ENCODE measurements at regions of chr19 and their contacts with region 1.

Region 1: GRCh38 chr19:38904581-38905539 is 5.1 kb downstream of the NFKBIB start:
- DNase-seq: no peak
- H3K4me3 ChIP-seq: no peak overlapping the region
- H3K27ac ChIP-seq: no peak overlapping the region
- H3K4me1 ChIP-seq: peaks cover 0 to 6% (median 3%) of the 10 kb centered on the region in 4 experiments; a peak in 3 of 7 replicates
- H3K27me3 ChIP-seq: no peaks in the 10 kb centered on the region
- CTCF ChIP-seq: no peak
- EP300 ChIP-seq: no peak
- POLR2A ChIP-seq: no peak
- RAD21 ChIP-seq: no peak

Region 2: DNA sequence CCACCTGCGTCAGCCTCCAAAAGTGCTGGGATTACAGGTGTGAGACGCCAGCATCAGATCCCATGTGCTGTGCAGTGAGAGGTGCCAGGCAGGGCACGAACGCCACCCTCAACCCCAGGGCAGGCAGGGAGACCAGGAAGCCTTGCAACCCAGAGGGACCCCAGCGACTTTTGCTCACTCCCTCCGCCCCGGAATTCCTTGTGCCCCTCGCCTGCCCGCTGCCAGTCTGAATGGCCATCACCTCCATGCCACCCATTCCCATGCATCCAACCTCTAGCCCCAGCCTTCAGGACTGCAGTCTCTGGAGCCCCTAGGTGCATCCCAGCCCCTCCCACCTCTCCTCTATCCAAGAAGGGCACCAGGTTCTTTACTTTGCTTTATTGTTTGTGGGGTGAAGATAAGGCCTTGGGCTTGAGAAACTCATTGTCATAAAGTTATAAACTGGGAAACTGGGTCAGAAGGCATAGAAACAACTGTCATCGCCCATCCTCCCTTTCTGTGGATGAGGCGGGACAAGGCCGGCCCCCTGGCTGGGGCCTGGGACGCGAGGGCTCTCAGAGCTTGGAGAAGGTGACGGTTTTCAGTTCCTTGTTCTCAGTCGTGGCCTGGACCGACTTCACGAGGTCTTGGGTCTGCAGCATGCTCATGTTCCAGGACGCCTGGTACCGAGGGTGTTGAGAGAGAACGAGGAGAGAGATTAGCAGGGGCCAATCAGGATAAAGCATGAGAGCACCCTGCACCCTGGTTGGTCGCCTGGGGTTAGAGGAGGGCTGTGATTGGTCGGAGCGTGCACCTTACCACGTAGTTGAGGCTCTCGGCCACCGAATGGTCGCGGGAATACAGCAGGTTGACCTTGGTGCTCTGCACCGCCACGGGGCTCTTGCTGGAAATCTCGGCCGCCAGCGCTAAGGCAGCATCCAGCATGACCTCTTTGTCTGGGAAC is 89.5 kb before region 1 on chr19:
- CTCF ChIA-PET with region 1: no interaction called
- POLR2A ChIA-PET with region 1: no interaction called
- DNase-seq: no peak
- H3K4me3 ChIP-seq: no peak overlapping the region
- H3K27ac ChIP-seq: no peak overlapping the region
- H3K4me1 ChIP-seq: no peaks in the 10 kb centered on the region
- H3K27me3 ChIP-seq: no peaks in the 10 kb centered on the region
- CTCF ChIP-seq: no peak
- EP300 ChIP-seq: no peak
- POLR2A ChIP-seq: no peak
- RAD21 ChIP-seq: no peak

Region 3: DNA sequence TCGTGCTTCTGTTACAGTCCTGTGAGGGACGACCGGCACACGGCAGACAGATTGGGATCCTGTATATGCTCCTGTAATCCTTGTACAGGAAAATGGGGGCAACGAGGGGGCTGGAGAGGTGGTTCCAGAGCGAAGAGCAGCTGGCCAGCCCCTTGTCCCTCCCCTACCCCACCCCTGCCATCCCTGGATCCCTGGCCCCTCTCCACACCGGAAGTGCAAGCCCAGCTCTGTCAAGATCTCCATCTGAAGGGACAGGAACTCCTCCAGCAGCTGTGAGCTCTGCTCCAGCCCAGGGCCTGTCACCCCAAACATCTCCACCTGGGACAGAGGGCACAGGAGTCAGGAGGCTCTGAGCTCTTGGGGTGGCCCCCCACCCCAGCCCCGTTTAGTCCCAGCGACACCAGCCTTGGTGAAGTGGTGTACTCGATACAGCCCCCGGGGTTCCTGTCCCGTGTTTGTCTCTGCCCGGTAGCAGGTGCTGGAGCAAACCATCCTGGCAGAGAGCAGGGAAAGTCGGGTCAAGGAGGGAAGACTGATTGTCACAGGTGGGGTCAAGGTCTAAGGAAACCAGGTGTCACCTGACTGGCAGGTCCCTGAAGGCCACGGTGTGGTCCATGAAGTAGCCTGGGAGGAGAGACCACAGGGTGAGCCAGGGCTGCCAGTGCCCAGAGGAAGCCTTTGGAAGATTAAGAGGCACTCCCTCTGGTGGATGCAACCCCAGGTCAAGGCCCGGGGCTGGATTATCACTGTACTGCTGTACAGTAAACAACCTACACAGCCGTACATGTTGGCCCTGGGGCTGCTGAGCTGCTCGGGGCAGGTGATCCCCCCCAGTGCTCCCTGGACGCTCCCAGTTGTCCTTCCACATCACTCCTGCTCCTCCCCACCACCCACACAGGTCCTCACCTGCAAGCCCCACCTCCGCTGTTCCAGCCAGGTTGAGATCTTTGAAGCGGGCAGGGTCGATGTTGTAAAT is 12.9 kb after region 1 on chr19:
- CTCF ChIA-PET with region 1: interaction called, 5 read pairs
- POLR2A ChIA-PET with region 1: interaction called, 10 read pairs
- DNase-seq: no peak
- H3K4me3 ChIP-seq: no peak overlapping the region
- H3K27ac ChIP-seq: no peak overlapping the region
- H3K4me1 ChIP-seq: no peaks in the 10 kb centered on the region
- H3K27me3 ChIP-seq: no peaks in the 10 kb centered on the region; a peak in 1 of 7 replicates
- CTCF ChIP-seq: peak in 1 of 3 experiments; percentile 11; a peak in 2 of 4 replicates
- EP300 ChIP-seq: no peak
- POLR2A ChIP-seq: no peak
- RAD21 ChIP-seq: no peak

Region 4: DNA sequence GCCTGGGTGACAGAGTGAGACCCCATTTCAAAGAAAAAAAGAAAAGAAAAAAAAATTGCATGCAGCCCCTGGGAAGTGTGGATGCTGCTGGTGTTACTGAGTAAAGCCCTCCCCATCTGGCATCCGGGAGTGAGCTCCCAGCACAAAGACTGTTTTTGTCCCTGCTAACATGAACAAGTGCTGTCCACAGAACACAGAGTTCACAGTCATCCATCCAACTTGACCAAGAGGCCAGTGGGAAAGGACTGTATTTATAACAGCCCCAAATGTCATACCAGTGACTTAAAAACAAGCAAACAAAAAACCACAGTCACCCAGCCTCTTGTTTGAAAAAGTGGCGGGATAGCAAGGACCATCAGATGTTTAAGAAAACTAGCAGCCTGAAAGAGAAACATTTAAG is 59.9 kb after region 1 on chr19:
- CTCF ChIA-PET with region 1: no interaction called
- POLR2A ChIA-PET with region 1: no interaction called
- DNase-seq: no peak
- H3K4me3 ChIP-seq: no peak overlapping the region
- H3K27ac ChIP-seq: no peak overlapping the region
- H3K4me1 ChIP-seq: peaks cover 0 to 3% (median under 1%) of the 10 kb centered on the region in 4 experiments; a peak in 2 of 7 replicates
- H3K27me3 ChIP-seq: no peaks in the 10 kb centered on the region
- CTCF ChIP-seq: no peak
- EP300 ChIP-seq: no peak
- POLR2A ChIP-seq: no peak
- RAD21 ChIP-seq: no peak

Region 5: DNA sequence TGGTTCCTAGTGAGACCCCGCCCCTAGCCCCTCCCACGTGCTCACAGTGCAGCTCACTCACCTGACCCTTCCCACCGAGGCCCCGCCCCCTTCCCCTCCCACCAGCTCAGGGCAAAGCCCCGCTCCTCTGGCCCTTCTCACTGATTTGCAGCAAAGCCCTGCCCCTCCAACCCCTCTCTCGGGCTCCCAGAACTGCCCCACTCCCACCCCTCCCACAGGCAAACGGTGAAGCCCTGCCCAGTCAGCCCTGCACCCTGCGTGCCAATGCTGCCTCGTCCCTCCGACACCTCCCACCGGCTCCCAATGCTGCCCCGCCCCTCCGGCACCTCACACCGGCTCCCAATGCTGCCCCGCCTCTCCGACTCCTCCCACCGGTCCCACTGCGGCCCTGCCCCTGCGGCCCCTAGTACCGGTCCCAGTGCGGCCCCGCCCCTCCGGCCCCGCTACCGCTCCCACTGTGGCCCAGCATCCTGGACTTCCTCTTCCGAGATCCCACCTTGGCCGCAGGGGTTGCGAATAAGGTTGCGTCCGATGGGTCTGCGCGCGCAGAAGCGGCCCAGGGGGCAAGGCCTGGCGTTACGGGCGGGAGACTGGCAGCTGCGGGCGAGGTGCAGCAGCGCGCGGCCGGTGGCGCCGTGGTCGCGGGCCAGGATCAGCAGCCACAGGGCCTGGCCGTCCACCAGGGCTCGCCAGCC is 126.7 kb after region 1 on chr19:
- CTCF ChIA-PET with region 1: no interaction called
- POLR2A ChIA-PET with region 1: no interaction called
- DNase-seq: peak; percentile 97 to 99
- H3K4me3 ChIP-seq: peak overlapping the region; percentile 68 to 91 (median 80)
- H3K27ac ChIP-seq: no peak overlapping the region
- H3K4me1 ChIP-seq: peaks cover 0 to 6% (median 4%) of the 10 kb centered on the region in 4 experiments; a peak in 5 of 7 replicates
- H3K27me3 ChIP-seq: no peaks in the 10 kb centered on the region
- CTCF ChIP-seq: no peak
- EP300 ChIP-seq: no peak
- POLR2A ChIP-seq: peak in 1 of 2 experiments; percentile 3; a peak in 2 of 3 replicates
- RAD21 ChIP-seq: no peak

Measured in H1 (cell line).